ENCODE measurements at regions of chr1 and their contacts with region 1.

Region 1: GRCh38 chr1:201955009-201955728 is at the start of gene TIMM17A:
- DNase-seq: peak; percentile 93
- H3K4me3 Mint-ChIP-seq: peak within 1 kb of the TSS; percentile 99
- H3K27ac Mint-ChIP-seq: peak within 1 kb of the TSS; percentile 96
- H3K4me1 Mint-ChIP-seq: peaks cover 14% of the 10 kb centered on the region
- H3K27me3 Mint-ChIP-seq: peaks cover 2% of the 10 kb centered on the region
- total RNA-seq, gene TIMM17A: 92.6 and 96.0 TPM in 2 replicates

Region 2: GRCh38 chr1:201828820-201829774 is 126.1 kb before region 1 on chr1 and contains the start of gene IPO9:
- intact Hi-C with region 1: loop called (anchors 1 kb)
- DNase-seq: peak; percentile 92
- H3K4me3 Mint-ChIP-seq: peak within 1 kb of the TSS; percentile 98
- H3K27ac Mint-ChIP-seq: peak within 1 kb of the TSS; percentile 91
- H3K4me1 Mint-ChIP-seq: peaks cover 33% of the 10 kb centered on the region
- H3K27me3 Mint-ChIP-seq: no peaks in the 10 kb centered on the region
- total RNA-seq, gene IPO9: 64.7 and 66.7 TPM in 2 replicates

Region 3: GRCh38 chr1:201895913-201896807 is 59.0 kb before region 1 on chr1:
- intact Hi-C with region 1: loop called (anchors 1 kb)
- DNase-seq: peak; percentile 79
- H3K4me3 Mint-ChIP-seq: peak overlapping the region; percentile 9
- H3K27ac Mint-ChIP-seq: peak overlapping the region; percentile 36
- H3K4me1 Mint-ChIP-seq: peaks cover 7% of the 10 kb centered on the region
- H3K27me3 Mint-ChIP-seq: peaks cover 12% of the 10 kb centered on the region

Region 4: DNA sequence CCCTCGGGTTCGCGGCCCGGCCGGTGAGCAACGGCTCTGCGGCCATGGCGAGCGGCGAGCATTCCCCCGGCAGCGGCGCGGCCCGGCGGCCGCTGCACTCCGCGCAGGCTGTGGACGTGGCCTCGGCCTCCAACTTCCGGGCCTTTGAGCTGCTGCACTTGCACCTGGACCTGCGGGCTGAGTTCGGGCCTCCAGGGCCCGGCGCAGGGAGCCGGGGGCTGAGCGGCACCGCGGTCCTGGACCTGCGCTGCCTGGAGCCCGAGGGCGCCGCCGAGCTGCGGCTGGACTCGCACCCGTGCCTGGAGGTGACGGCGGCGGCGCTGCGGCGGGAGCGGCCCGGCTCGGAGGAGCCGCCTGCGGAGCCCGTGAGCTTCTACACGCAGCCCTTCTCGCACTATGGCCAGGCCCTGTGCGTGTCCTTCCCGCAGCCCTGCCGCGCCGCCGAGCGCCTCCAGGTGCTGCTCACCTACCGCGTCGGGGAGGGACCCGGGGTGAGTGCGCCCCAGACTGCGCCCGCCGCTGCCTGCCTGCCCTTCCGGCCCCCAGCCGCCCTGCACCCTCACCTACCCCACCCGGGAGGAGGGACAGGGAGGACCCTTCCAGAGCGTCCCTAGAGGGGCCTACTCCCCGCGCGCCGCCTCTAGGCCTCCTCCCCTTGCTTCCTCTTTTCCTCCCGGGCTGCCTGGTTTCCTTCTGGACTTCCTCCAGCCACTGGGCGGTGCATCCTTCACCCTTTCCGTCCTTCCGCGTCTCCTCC is 27.6 kb after region 1 on chr1 and contains the start of gene RNPEP:
- intact Hi-C with region 1: loop called (anchors 1 kb)
- DNase-seq: peak; percentile 49
- H3K4me3 Mint-ChIP-seq: peak within 1 kb of the TSS; percentile 97
- H3K27ac Mint-ChIP-seq: peak within 1 kb of the TSS; percentile 84
- H3K4me1 Mint-ChIP-seq: peaks cover 17% of the 10 kb centered on the region
- H3K27me3 Mint-ChIP-seq: peaks cover 8% of the 10 kb centered on the region
- total RNA-seq, gene RNPEP: 42.5 and 43.6 TPM in 2 replicates